CD8-positive, alpha-beta T cell (primary cell): ENCODE measurements at regions of chr14 and their contacts with region 1.

Region 1: DNA sequence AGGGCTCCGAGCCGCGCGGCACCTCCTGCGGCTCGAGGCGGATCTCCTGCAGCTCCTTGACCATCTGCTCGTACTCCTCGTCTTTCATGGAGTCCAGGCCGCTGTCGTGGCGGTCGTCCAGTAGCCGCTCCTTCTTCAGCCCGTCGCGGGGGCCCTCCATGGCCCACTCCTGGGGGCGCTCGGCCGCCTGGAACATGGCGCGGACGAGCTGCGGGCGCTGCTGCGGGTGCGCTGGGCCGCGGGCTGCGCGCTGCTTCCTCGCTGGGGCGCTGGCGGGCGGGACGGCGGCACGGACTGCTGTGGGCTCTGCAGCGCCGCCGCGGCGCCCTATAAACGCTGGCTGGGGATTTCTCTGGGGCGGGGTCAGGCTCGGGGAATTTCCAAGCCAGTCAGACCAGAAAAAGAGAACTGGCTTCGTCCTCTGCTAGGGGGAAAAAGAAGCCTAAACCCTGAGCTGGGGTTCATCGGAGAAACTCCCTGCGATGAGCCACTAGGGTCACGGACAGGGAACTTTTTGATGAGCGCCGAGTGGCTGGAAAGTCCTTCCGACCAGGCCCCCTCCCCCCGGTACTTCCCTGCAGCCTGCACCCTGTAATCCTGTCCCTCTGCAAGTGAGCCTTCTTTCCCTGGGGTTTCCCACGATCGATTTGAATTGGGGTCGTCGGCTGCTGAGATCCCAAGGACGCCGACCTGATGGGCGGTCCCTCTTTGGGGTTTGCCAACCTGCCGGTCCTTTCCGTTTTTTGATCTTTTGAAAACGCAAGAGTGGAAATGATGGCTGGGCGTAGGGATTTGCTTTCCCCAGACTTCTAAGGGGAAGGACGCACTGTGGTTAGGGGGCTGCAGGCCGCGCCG is at the start of gene NFKBIA:
- DNase-seq: peak; percentile 87 to 97 (median 93)
- ATAC-seq: peak; percentile 60
- H3K4me3 ChIP-seq: peak within 1 kb of the TSS; percentile 84 to 86
- H3K4me3 Mint-ChIP-seq: peak within 1 kb of the TSS; percentile 92
- H3K27ac ChIP-seq: peak within 1 kb of the TSS; percentile 93 to 95
- H3K27ac Mint-ChIP-seq: peak within 1 kb of the TSS; percentile 97
- H3K4me1 ChIP-seq: peaks cover 53% of the 10 kb centered on the region
- H3K4me1 Mint-ChIP-seq: peaks cover 52% of the 10 kb centered on the region
- H3K27me3 ChIP-seq: no peaks in the 10 kb centered on the region
- H3K27me3 Mint-ChIP-seq: no peaks in the 10 kb centered on the region
- CTCF ChIP-seq: no peak
- total RNA-seq, gene NFKBIA: 1,097 to 1,133 TPM

Region 2: GRCh38 chr14:35046048-35046741 is 358.5 kb before region 1 on chr14 and contains the start of gene FAM177A1:
- CTCF ChIA-PET with region 1: no interaction called
- POLR2A ChIA-PET with region 1: interaction called, 14 read pairs
- intact Hi-C with region 1: loop called (anchors 1 kb)
- DNase-seq: peak; percentile 97 to 100 (median 99)
- ATAC-seq: peak; percentile 83
- H3K4me3 ChIP-seq: peak within 1 kb of the TSS; percentile 81 to 96
- H3K4me3 Mint-ChIP-seq: peak within 1 kb of the TSS; percentile 82
- H3K27ac ChIP-seq: peak within 1 kb of the TSS; percentile 96 to 100
- H3K27ac Mint-ChIP-seq: peak within 1 kb of the TSS; percentile 98
- H3K4me1 ChIP-seq: peaks cover 20% of the 10 kb centered on the region
- H3K4me1 Mint-ChIP-seq: peaks cover 28% of the 10 kb centered on the region
- H3K27me3 ChIP-seq: no peaks in the 10 kb centered on the region
- H3K27me3 Mint-ChIP-seq: no peaks in the 10 kb centered on the region
- CTCF ChIP-seq: no peak
- total RNA-seq, gene FAM177A1: 227 to 230 TPM

Region 3: DNA sequence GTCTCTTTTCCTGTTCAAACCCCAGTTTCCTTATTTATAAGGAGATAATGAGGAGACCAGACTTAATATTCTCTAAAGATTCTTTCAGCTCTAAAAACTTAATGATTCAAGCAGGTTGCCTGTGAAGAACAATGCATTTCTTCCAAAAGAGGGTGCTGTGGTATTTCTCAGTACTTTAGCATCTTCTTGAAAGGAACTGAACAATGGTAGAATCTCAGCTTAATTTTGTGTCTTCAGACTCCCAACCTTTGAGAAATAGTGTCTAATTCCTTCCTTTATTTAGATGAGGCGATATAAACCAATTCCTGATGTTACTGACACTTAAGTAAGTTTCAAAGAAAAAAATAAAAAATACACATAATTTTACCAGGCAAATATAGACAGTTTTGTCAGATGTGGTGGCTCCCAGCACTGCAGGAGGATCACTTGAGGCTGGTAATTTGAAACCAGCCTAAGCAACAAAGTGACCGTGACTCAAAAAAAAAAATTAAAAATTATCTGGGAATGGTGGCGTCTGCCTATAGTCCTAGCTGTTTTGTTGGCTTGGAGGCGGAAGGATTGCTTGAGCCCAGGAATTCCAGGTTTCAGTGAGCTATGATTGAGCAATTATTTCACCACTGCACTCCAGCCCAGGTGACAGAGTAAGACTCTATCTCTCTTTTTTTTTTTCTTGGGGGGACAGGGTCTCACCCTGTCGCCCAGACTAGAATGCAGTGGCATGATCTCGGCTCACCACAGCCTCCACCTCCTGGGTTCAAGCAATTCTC is 189.4 kb before region 1 on chr14:
- CTCF ChIA-PET with region 1: interaction called, 10 read pairs
- POLR2A ChIA-PET with region 1: interaction called, 8 read pairs
- intact Hi-C with region 1: loop called in 1 of 2 experiments (anchors 1 kb)
- DNase-seq: peak in 2 of 9 experiments; percentile 39 to 53
- ATAC-seq: no peak
- H3K4me3 ChIP-seq: no peak overlapping the region
- H3K4me3 Mint-ChIP-seq: no peak overlapping the region
- H3K27ac ChIP-seq: no peak overlapping the region
- H3K27ac Mint-ChIP-seq: peak overlapping the region; percentile 13
- H3K4me1 ChIP-seq: no peaks in the 10 kb centered on the region
- H3K4me1 Mint-ChIP-seq: peaks cover 7% of the 10 kb centered on the region
- H3K27me3 ChIP-seq: no peaks in the 10 kb centered on the region
- H3K27me3 Mint-ChIP-seq: no peaks in the 10 kb centered on the region
- CTCF ChIP-seq: no peak

Region 4: DNA sequence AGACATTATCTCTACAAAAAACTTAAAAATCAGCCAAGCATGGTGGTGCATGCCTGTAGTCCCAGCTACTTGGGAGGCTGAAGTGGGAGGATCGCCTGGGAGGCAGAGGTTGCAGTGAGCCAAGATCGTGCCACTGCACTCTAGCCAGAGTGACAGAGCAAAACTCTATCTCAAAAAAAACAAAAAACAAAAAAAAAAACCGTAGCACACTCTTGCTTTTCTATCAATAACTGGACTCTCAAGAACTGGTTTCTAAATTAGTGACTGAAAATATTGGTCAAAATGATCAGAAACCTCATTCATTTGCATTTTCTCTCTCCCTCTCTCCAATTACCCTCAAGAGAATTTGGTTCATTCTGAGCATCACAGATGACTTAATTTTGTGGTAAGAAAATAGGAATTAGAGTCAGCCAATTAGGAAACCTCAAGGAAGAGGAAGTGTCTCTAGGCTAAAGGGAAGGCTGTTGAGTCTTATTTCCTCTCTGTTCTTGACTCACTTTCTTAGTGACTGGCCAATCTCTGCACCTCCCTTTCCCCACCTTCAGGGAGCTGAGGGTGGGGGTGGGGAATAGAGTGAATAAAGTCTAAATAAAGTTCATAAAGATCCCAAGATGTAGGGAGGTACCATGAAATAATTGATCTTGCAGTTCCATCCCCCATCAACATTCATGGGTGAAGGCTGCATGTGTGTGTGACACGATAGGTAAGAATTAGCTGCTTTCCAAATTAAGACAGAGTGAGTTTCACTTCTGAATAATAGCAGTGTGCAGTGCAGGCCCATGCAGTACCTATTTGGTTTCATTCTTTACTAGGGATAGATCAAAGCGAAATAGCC is 119.3 kb before region 1 on chr14:
- CTCF ChIA-PET with region 1: no interaction called
- POLR2A ChIA-PET with region 1: interaction called, 79 read pairs
- intact Hi-C with region 1: no loop called
- DNase-seq: peak in 2 of 9 experiments; percentile 28 to 58
- ATAC-seq: peak; percentile 62
- H3K4me3 ChIP-seq: no peak overlapping the region
- H3K4me3 Mint-ChIP-seq: peak overlapping the region; percentile 13
- H3K27ac ChIP-seq: peak overlapping the region; percentile 15 to 78
- H3K27ac Mint-ChIP-seq: peak overlapping the region; percentile 91
- H3K4me1 ChIP-seq: peaks cover 28% of the 10 kb centered on the region
- H3K4me1 Mint-ChIP-seq: peaks cover 33% of the 10 kb centered on the region
- H3K27me3 ChIP-seq: no peaks in the 10 kb centered on the region
- H3K27me3 Mint-ChIP-seq: no peaks in the 10 kb centered on the region
- CTCF ChIP-seq: no peak

Region 5: DNA sequence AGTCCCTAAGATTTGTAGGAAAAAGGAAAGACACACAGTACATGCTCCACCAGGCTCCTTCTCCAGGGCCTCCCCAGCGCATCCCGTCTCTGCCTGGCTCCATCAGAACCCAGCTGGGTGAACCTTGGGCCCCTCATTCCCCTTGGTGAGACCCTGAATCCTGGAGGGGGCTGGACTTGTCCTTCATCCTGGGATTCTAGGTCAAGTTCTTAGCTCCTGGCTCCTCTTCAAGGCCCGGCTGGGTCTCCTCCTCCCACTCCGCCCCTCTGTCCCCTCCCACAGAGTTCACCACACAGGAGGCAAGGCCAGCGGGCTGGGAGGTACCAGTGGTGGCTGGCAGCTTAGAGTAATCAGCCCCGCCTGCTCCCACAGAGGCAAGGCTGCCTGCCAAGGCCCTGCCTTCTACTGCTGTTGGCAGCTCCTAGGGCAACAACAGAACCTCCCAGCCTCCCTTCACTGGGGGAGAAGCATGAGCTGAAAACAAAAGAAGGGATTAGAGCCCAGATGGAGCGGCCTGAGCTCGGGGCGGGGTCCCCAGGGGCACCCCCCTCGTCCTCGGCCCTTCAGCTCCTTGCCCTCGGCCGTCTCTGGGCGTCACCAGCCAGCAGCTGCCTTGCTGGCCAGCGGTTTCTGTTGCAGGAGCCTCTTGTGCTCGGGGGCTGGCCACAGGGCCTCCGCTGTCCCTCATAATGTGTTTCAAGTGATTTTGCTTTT is 63.1 kb before region 1 on chr14:
- CTCF ChIA-PET with region 1: interaction called, 4 read pairs
- POLR2A ChIA-PET with region 1: interaction called, 11 read pairs
- intact Hi-C with region 1: no loop called
- DNase-seq: peak in 6 of 9 experiments; percentile 22 to 69 (median 53)
- ATAC-seq: peak; percentile 95
- H3K4me3 ChIP-seq: no peak overlapping the region
- H3K4me3 Mint-ChIP-seq: peak overlapping the region; percentile 3
- H3K27ac ChIP-seq: no peak overlapping the region
- H3K27ac Mint-ChIP-seq: peak overlapping the region; percentile 22
- H3K4me1 ChIP-seq: peaks cover 29% of the 10 kb centered on the region
- H3K4me1 Mint-ChIP-seq: peaks cover 32% of the 10 kb centered on the region
- H3K27me3 ChIP-seq: no peaks in the 10 kb centered on the region
- H3K27me3 Mint-ChIP-seq: no peaks in the 10 kb centered on the region
- CTCF ChIP-seq: no peak

Region 6: GRCh38 chr14:35808076-35808652 is 403.5 kb after region 1 on chr14:
- CTCF ChIA-PET with region 1: no interaction called
- POLR2A ChIA-PET with region 1: no interaction called
- intact Hi-C with region 1: loop called in 1 of 2 experiments (anchors 5 kb)
- DNase-seq: peak in 3 of 9 experiments; percentile 16 to 63 (median 41)
- ATAC-seq: no peak
- H3K4me3 ChIP-seq: peak overlapping the region; percentile 68 to 80
- H3K4me3 Mint-ChIP-seq: peak overlapping the region; percentile 98
- H3K27ac ChIP-seq: peak overlapping the region; percentile 49 to 86
- H3K27ac Mint-ChIP-seq: peak overlapping the region; percentile 92
- H3K4me1 ChIP-seq: peaks cover 15% of the 10 kb centered on the region
- H3K4me1 Mint-ChIP-seq: peaks cover 38% of the 10 kb centered on the region
- H3K27me3 ChIP-seq: no peaks in the 10 kb centered on the region
- H3K27me3 Mint-ChIP-seq: no peaks in the 10 kb centered on the region
- CTCF ChIP-seq: no peak

Region 7: GRCh38 chr14:36529062-36529461 is 1124.4 kb after region 1 on chr14:
- CTCF ChIA-PET with region 1: no interaction called
- POLR2A ChIA-PET with region 1: no interaction called
- intact Hi-C with region 1: no loop called
- DNase-seq: no peak
- ATAC-seq: no peak
- H3K4me3 ChIP-seq: no peak overlapping the region
- H3K4me3 Mint-ChIP-seq: no peak overlapping the region
- H3K27ac ChIP-seq: no peak overlapping the region
- H3K27ac Mint-ChIP-seq: no peak overlapping the region
- H3K4me1 ChIP-seq: no peaks in the 10 kb centered on the region
- H3K4me1 Mint-ChIP-seq: no peaks in the 10 kb centered on the region
- H3K27me3 ChIP-seq: peaks cover 11 to 12% of the 10 kb centered on the region in 2 experiments
- H3K27me3 Mint-ChIP-seq: peaks cover 45% of the 10 kb centered on the region
- CTCF ChIP-seq: no peak